ENCODE measurements at regions of chrX and their contacts with region 1.

Region 1: DNA sequence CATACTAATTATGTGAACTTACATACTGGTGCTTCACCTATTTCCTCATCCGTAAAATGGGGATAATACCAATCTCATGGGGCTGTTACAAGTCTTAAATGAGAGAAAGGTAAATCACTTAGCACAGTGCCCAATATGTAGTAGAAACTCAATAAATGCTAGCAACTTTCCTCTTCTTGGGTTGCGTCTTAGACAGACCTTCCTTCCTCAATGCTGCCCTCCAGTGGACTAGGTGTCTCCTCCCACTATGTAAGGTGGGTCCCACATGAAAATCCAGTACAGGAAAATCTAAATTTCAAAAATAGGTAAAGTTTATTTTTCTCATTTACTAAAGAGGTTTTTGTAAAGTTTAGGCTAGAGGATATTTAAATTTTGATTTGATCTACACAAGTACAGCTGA is 20.6 kb downstream of the ZDHHC9 start:
- DNase-seq: peak; percentile 72
- ATAC-seq: peak; percentile 69
- H3K4me3 ChIP-seq: no peak overlapping the region
- H3K4me3 Mint-ChIP-seq: no peak overlapping the region
- H3K27ac ChIP-seq: no peak overlapping the region
- H3K27ac Mint-ChIP-seq: no peak overlapping the region
- H3K4me1 ChIP-seq: peaks cover 4 to 8% of the 10 kb centered on the region in 2 donors
- H3K4me1 Mint-ChIP-seq: peaks cover 13% of the 10 kb centered on the region
- H3K27me3 ChIP-seq: no peaks in the 10 kb centered on the region
- H3K27me3 Mint-ChIP-seq: no peaks in the 10 kb centered on the region
- CTCF ChIP-seq: peak; percentile 68

Region 2: DNA sequence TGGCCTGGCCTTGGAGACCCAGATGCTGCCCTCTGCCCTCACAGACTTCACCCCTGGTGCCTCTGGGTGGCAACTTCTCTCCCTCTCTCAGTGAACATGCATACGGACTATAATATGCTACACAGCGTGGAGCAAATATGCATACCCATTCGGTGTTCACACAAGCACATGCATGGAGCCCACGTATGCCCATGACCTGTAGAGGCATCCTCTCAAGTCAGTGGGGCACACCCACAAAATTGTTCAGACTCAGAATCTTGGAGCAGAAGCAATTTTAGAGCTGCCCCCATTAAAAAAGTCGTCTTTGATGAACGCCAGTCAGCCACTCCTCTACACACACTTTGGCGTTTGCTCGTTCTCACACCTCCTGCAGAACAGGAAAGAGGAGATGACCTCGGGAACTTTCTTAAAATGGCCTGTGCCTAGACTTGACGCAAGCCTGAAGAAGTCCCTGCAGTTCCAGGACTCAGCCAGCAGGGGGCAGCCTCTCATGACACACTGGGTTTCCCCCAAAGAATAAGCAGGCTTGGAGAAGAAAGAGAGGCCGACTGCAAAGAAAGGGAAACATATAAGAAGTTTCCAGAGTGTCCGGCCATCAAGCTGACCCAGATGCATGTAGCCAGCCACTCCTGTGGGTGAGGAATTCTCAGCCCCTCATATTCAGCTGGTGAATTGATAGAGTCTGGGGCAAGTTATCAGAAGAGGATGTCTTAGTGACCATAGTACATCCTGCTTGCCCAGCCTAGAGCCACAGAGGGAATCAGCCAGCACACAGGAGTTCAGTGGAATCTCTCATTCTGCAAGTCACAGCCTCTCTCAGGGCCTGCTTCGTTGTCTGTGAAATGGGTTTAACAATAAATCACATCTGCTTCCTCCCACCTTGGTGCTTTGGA is 185.7 kb before region 1 on chrX:
- CTCF ChIA-PET with region 1: interaction called, 73 read pairs
- POLR2A ChIA-PET with region 1: no interaction called
- intact Hi-C with region 1: no loop called
- DNase-seq: peak; percentile 77
- ATAC-seq: peak; percentile 78
- H3K4me3 ChIP-seq: no peak overlapping the region
- H3K4me3 Mint-ChIP-seq: no peak overlapping the region
- H3K27ac ChIP-seq: no peak overlapping the region
- H3K27ac Mint-ChIP-seq: no peak overlapping the region
- H3K4me1 ChIP-seq: peaks cover 0 to 5% of the 10 kb centered on the region in 2 donors
- H3K4me1 Mint-ChIP-seq: peaks cover 2% of the 10 kb centered on the region
- H3K27me3 ChIP-seq: no peaks in the 10 kb centered on the region
- H3K27me3 Mint-ChIP-seq: no peaks in the 10 kb centered on the region
- CTCF ChIP-seq: peak; percentile 78

Region 3: DNA sequence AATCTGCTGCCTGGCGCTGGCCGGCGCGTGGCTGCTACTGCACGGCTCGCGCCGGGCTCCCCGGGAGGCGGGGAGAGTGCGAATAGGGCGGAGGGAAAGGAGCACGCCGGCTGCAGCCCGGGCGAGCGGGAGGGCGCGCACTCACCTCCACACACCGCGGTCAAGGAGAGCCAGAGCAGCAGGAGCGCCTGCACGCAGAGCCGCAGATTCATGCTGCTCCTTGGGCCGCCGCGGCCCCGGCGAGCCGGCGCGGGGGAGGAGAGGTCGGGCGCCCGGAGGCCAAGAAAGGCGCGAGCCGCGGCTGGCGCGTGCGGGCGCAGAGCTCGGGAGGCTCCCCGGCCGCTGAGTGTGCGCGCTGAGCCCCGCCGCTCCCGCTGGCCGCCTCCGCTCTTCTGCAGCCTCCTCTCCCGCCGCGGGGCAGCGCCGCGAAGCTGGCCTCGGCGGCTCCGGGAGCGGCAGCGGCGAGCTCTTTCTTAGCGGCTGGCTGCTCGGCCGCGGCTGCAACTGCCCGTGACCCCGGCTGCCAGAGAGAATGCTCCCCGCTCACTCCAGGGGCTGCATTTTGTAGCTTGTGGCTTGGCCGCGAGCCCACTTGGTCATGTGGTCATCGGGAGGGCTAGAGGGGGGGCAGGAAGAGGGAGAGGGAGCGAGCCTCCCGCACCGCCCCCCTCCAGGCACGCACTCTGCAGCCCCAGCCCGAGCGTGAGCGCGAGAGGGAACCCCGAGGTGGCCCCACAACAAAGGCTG is 168.5 kb before region 1 on chrX and contains the start of gene APLN:
- CTCF ChIA-PET with region 1: interaction called, 28 read pairs
- POLR2A ChIA-PET with region 1: no interaction called
- intact Hi-C with region 1: loop called (anchors 1 kb)
- DNase-seq: peak; percentile 32
- ATAC-seq: peak; percentile 45
- H3K4me3 ChIP-seq: peak within 1 kb of the TSS in 4 of 5 experiments; percentile 24 to 55 (median 42)
- H3K4me3 Mint-ChIP-seq: peak within 1 kb of the TSS; percentile 79
- H3K27ac ChIP-seq: no peak within 1 kb of the TSS
- H3K27ac Mint-ChIP-seq: no peak within 1 kb of the TSS
- H3K4me1 ChIP-seq: peaks cover 19% of the 10 kb centered on the region in 2 donors
- H3K4me1 Mint-ChIP-seq: peaks cover 15% of the 10 kb centered on the region
- H3K27me3 ChIP-seq: peaks cover 0 to 27% (median 5%) of the 10 kb centered on the region in 4 experiments
- H3K27me3 Mint-ChIP-seq: peaks cover 5% of the 10 kb centered on the region
- CTCF ChIP-seq: no peak
- total RNA-seq, gene APLN: not detected in 2 replicates

Region 4: GRCh38 chrX:129678614-129679195 is 144.4 kb before region 1 on chrX:
- CTCF ChIA-PET with region 1: interaction called, 28 read pairs
- POLR2A ChIA-PET with region 1: no interaction called
- intact Hi-C with region 1: loop called (anchors 1 kb)
- DNase-seq: no peak
- ATAC-seq: peak; percentile 28
- H3K4me3 ChIP-seq: peak overlapping the region in 4 of 5 experiments; percentile 37 to 58 (median 56)
- H3K4me3 Mint-ChIP-seq: peak overlapping the region; percentile 85
- H3K27ac ChIP-seq: peak overlapping the region; percentile 16 to 40
- H3K27ac Mint-ChIP-seq: peak overlapping the region; percentile 82
- H3K4me1 ChIP-seq: peaks cover 5 to 16% of the 10 kb centered on the region in 2 donors
- H3K4me1 Mint-ChIP-seq: peaks cover 12% of the 10 kb centered on the region
- H3K27me3 ChIP-seq: no peaks in the 10 kb centered on the region
- H3K27me3 Mint-ChIP-seq: no peaks in the 10 kb centered on the region
- CTCF ChIP-seq: no peak

Region 5: DNA sequence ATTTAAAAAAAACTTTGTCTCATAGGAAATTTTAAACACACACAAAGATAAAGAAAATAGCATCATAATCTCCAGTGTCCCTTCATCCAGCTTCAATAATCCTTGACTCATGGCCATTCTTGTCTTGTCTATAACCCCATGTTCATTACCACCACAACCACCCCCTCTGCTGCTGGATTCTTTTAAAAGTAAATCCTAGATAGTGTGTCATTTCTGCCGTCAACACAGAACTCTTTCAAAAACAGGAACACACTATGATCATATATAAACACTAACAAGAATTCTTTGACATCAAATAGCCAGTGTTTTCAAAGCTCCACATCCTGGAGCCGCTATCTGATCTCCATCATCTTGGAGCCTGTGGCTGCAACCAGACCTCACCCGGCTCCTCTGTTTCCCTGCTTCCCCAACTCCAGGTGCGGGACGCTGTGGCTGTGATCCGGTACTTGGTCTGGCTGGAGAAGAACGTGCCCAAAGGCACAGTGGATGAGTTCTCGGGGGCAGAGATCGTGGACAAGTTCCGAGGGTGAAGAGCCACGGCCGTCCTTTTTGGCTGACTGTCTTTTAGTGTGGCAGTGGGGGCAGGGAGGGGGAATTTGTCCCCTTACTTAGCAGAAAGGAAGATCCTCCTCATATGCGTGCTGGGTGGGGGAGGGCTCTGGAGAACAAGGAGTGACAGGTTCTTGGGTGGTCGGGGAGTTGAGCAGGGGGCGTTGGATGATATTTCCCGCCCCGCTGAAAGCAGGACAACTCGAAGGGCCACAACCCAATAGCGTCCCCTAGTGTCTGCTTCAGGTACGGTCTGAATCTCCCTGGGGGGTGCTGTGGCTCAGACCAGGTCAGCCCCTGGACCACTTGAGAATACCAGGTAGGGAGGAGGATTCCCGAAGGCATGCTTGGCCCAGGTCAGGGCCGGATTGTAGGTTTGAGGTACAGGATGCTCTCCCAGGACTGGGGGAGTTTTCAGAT is 68.8 kb before region 1 on chrX:
- CTCF ChIA-PET with region 1: interaction called, 17 read pairs
- POLR2A ChIA-PET with region 1: no interaction called
- intact Hi-C with region 1: loop called (anchors 1 kb)
- DNase-seq: no peak
- ATAC-seq: no peak
- H3K4me3 ChIP-seq: no peak overlapping the region
- H3K4me3 Mint-ChIP-seq: peak overlapping the region; percentile 10
- H3K27ac ChIP-seq: no peak overlapping the region
- H3K27ac Mint-ChIP-seq: peak overlapping the region; percentile 73
- H3K4me1 ChIP-seq: peaks cover 37 to 52% of the 10 kb centered on the region in 2 donors
- H3K4me1 Mint-ChIP-seq: peaks cover 46% of the 10 kb centered on the region
- H3K27me3 ChIP-seq: no peaks in the 10 kb centered on the region
- H3K27me3 Mint-ChIP-seq: no peaks in the 10 kb centered on the region
- CTCF ChIP-seq: peak; percentile 24

Region 6: DNA sequence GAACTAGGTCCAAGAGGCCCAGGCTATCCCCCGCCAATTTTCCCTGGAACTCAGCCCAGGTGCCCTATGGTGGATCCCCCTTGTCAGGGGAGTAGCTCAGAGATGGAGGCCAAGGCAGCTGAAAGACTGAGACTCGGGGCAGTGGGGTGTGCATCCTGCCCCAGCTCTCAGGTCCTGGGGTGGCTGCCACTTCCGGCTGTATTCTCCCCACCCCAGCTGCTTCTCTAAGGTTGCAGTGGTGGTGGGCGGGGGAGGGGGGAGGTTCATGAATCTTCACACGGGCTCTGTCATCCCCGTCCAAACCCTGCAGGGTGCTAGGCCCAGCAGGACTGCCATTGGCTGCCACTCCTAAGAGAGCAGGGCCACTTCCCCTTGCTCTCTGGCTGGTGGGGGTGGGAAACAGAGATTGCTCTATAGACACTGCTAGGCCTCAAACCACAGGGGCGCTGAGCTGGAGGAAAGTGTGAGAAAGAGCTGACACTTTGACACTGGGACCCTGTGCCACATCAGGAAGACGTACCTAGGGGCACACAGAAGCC is 41.9 kb before region 1 on chrX:
- CTCF ChIA-PET with region 1: interaction called, 13 read pairs
- POLR2A ChIA-PET with region 1: no interaction called
- intact Hi-C with region 1: loop called (anchors 5 kb)
- DNase-seq: peak; percentile 86
- ATAC-seq: peak; percentile 68
- H3K4me3 ChIP-seq: peak overlapping the region; percentile 65 to 83 (median 78)
- H3K4me3 Mint-ChIP-seq: peak overlapping the region; percentile 89
- H3K27ac ChIP-seq: peak overlapping the region; percentile 97 to 99
- H3K27ac Mint-ChIP-seq: peak overlapping the region; percentile 97
- H3K4me1 ChIP-seq: peaks cover 76 to 81% of the 10 kb centered on the region in 2 donors
- H3K4me1 Mint-ChIP-seq: peaks cover 66% of the 10 kb centered on the region
- H3K27me3 ChIP-seq: no peaks in the 10 kb centered on the region
- H3K27me3 Mint-ChIP-seq: no peaks in the 10 kb centered on the region
- CTCF ChIP-seq: no peak

Region 7: GRCh38 chrX:129786210-129786651 is 36.9 kb before region 1 on chrX:
- CTCF ChIA-PET with region 1: interaction called, 13 read pairs
- POLR2A ChIA-PET with region 1: no interaction called
- intact Hi-C with region 1: no loop called
- DNase-seq: peak; percentile 78
- ATAC-seq: peak; percentile 73
- H3K4me3 ChIP-seq: peak overlapping the region in 4 of 5 experiments; percentile 8 to 46 (median 24)
- H3K4me3 Mint-ChIP-seq: peak overlapping the region; percentile 85
- H3K27ac ChIP-seq: peak overlapping the region; percentile 24 to 66
- H3K27ac Mint-ChIP-seq: peak overlapping the region; percentile 95
- H3K4me1 ChIP-seq: peaks cover 60 to 67% of the 10 kb centered on the region in 2 donors
- H3K4me1 Mint-ChIP-seq: peaks cover 59% of the 10 kb centered on the region
- H3K27me3 ChIP-seq: no peaks in the 10 kb centered on the region
- H3K27me3 Mint-ChIP-seq: no peaks in the 10 kb centered on the region
- CTCF ChIP-seq: no peak